ENCODE measurements at regions of chr1 and their contacts with region 1.

Region 1: DNA sequence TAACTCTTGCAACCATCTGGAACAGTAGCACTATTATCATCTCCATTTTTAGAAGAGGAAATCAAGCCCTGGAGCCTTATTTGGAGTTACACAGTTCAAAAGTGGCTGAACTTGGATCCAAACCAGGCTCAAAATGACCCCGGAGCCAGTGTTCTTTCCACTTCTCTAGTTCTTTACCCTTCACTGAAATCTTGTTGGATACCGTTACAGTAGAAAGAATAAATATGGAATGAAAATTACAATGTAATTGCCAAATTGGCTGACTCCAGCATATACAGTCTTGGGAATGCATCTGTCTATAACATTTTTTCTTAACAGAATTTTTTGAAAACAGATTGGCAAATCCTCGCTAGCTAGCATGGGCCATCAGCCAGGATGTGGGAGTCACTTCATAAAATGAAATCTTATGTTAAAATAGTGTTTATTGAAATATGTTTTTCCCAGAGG is 261.4 kb downstream of the CTH start:
- DNase-seq: no peak
- H3K4me3 ChIP-seq: no peak overlapping the region
- H3K27ac ChIP-seq: no peak overlapping the region
- H3K4me1 ChIP-seq: no peaks in the 10 kb centered on the region
- H3K27me3 ChIP-seq: no peaks in the 10 kb centered on the region
- CTCF ChIP-seq: no peak
- POLR2A ChIP-seq: no peak

Region 2: DNA sequence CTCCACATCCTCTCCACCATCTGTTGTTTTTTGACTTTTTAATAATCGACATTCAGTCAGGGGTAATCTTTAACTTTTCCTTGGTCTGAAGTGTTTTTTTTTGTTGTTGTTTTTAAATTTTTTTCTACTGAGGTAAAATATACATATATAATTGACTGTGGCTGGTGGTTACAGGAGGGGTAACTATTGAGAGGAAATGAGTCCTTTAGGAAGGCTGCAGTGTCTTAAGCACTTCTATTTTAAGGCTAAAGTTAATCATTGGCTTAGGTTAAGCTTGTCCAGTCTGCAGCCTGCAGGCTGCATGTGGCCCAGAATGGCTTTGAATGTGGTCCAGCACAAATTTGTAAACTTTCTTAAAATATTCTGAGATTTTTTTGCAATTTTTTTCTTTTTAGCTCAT is 88.9 kb before region 1 on chr1:
- CTCF ChIA-PET with region 1: no interaction called
- POLR2A ChIA-PET with region 1: no interaction called
- dilution Hi-C with region 1: no loop called
- intact Hi-C with region 1: no loop called
- DNase-seq: no peak
- H3K4me3 ChIP-seq: no peak overlapping the region
- H3K27ac ChIP-seq: no peak overlapping the region
- H3K4me1 ChIP-seq: no peaks in the 10 kb centered on the region
- H3K27me3 ChIP-seq: no peaks in the 10 kb centered on the region
- CTCF ChIP-seq: no peak
- POLR2A ChIP-seq: no peak

Region 3: GRCh38 chr1:70685300-70686241 is 13.1 kb after region 1 on chr1:
- CTCF ChIA-PET with region 1: interaction called, 10 read pairs
- POLR2A ChIA-PET with region 1: no interaction called
- dilution Hi-C with region 1: no loop called
- intact Hi-C with region 1: no loop called
- DNase-seq: peak; percentile 64
- H3K4me3 ChIP-seq: no peak overlapping the region
- H3K27ac ChIP-seq: no peak overlapping the region
- H3K4me1 ChIP-seq: no peaks in the 10 kb centered on the region
- H3K27me3 ChIP-seq: no peaks in the 10 kb centered on the region
- CTCF ChIP-seq: peak; percentile 65 to 81
- POLR2A ChIP-seq: no peak